CD8-positive, alpha-beta T cell (primary cell): ENCODE measurements at regions of chr16 and their contacts with region 1.

Region 1: DNA sequence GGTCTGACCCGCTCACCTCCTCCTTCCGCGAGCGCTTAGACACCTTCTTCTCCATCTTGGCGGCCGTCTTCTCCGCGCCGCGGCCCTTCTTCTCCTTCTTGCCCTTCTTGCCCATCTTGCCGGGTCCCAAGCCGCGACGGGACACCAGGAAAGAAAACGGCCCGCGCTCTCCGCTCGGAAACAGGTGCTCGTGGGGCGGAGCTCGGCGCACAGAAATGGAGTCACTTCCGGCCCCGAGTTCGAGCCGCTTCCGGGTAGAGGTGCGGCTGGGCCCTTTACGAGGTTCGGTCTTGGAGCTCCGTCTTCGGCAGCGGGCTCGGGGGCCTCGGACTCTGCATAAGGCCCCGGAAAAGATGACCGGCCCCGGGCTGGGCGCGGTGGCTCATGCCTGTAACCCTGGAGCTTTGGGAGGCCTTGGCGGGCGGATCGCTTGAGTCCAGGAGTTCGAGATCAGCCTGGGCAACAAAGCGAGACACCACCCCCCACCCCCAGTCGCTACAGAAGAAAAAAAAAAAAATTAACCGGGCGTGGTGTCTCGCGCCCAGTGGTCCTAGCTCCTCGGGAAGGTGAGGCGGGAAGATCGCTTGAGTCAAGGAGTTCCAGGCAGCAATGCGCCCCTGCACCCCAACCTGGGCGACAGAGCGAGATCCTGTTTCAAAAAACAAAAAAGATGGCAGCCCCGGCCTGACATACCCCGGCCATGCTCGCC is at the start of gene KLHDC4:
- DNase-seq: peak; percentile 78 to 94 (median 89)
- ATAC-seq: peak; percentile 43
- H3K4me3 ChIP-seq: peak within 1 kb of the TSS; percentile 86 to 89
- H3K4me3 Mint-ChIP-seq: peak within 1 kb of the TSS; percentile 98
- H3K27ac ChIP-seq: peak within 1 kb of the TSS; percentile 88 to 95
- H3K27ac Mint-ChIP-seq: peak within 1 kb of the TSS; percentile 99
- H3K4me1 ChIP-seq: peaks cover 45% of the 10 kb centered on the region
- H3K4me1 Mint-ChIP-seq: peaks cover 42% of the 10 kb centered on the region
- H3K27me3 ChIP-seq: no peaks in the 10 kb centered on the region
- H3K27me3 Mint-ChIP-seq: no peaks in the 10 kb centered on the region
- CTCF ChIP-seq: no peak
- total RNA-seq, gene KLHDC4: 74.0 to 81.6 TPM

Region 2: GRCh38 chr16:87316923-87317749 is 448.8 kb before region 1 on chr16 and contains the start of gene C16orf95:
- CTCF ChIA-PET with region 1: no interaction called
- POLR2A ChIA-PET with region 1: no interaction called
- intact Hi-C with region 1: loop called (anchors 2 kb)
- DNase-seq: peak; percentile 93 to 99 (median 97)
- ATAC-seq: peak; percentile 89
- H3K4me3 ChIP-seq: peak within 1 kb of the TSS; percentile 92 to 99
- H3K4me3 Mint-ChIP-seq: peak within 1 kb of the TSS; percentile 94
- H3K27ac ChIP-seq: peak within 1 kb of the TSS; percentile 76 to 81
- H3K27ac Mint-ChIP-seq: peak within 1 kb of the TSS; percentile 95
- H3K4me1 ChIP-seq: peaks cover 8% of the 10 kb centered on the region
- H3K4me1 Mint-ChIP-seq: peaks cover 14% of the 10 kb centered on the region
- H3K27me3 ChIP-seq: no peaks in the 10 kb centered on the region
- H3K27me3 Mint-ChIP-seq: no peaks in the 10 kb centered on the region
- CTCF ChIP-seq: peak; percentile 42
- total RNA-seq, gene C16orf95: 0.76 to 1.2 TPM

Region 3: DNA sequence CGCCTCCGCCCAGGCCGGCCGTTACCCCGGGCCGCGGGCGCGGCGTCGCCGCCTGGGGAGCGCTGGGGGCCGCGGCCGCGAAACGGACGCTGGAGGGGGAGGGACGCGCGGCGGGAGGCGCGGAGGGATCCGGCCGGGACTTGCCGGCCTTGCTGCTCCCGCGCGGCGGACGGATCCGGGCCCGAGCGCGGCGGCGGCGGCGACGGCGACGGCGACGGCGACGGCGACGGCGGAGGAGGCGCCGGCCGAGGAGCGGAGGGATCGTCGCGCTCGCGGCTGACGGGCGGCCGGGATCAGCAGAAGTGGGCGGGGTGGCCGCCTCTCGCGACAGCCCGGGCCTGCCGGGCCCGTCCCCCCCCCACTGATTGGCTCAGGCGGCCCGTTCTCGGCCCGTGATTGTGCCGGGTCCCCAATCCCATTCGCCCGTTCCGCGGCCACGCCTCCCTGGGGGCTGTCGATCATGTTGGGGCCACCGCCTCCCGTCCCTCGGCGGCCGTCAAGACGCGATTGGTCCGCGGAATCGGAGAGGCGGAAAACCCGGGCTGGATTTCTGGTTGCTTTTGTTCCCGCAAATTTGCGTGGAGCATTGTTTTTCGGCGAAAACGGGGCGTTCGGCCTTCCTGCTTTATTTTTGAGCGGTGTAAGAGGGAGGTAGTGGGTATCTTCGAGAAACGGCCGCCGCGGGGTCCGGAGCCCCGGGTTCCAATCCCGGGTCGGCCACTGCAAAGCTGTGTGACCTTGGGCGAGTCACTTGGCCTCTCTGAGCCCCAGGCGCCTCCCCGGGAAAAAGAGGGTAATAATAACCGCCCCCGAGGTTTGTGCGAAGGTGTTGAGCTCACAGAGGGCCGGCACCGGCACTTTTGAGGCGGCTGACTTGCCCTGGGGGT is 273.0 kb before region 1 on chr16 and contains the start of gene ZCCHC14:
- CTCF ChIA-PET with region 1: no interaction called
- POLR2A ChIA-PET with region 1: interaction called, 3 read pairs
- intact Hi-C with region 1: loop called (anchors 1 to 2 kb)
- DNase-seq: peak; percentile 97 to 99 (median 99)
- ATAC-seq: peak; percentile 92
- H3K4me3 ChIP-seq: peak within 1 kb of the TSS; percentile 70 to 71
- H3K4me3 Mint-ChIP-seq: peak within 1 kb of the TSS; percentile 89
- H3K27ac ChIP-seq: peak within 1 kb of the TSS; percentile 30 to 48
- H3K27ac Mint-ChIP-seq: peak within 1 kb of the TSS; percentile 82
- H3K4me1 ChIP-seq: peaks cover 41% of the 10 kb centered on the region
- H3K4me1 Mint-ChIP-seq: peaks cover 52% of the 10 kb centered on the region
- H3K27me3 ChIP-seq: no peaks in the 10 kb centered on the region
- H3K27me3 Mint-ChIP-seq: no peaks in the 10 kb centered on the region
- CTCF ChIP-seq: no peak
- total RNA-seq, gene ZCCHC14: 13.2 TPM

Region 4: GRCh38 chr16:87702325-87702811 is 63.6 kb before region 1 on chr16:
- CTCF ChIA-PET with region 1: interaction called, 4 read pairs
- POLR2A ChIA-PET with region 1: interaction called, 5 read pairs
- intact Hi-C with region 1: loop called in 1 of 2 experiments (anchors 5 kb)
- DNase-seq: peak in 8 of 9 experiments; percentile 17 to 67 (median 46)
- ATAC-seq: peak; percentile 56
- H3K4me3 ChIP-seq: peak overlapping the region in 1 of 2 experiments; percentile 0
- H3K4me3 Mint-ChIP-seq: peak overlapping the region; percentile 60
- H3K27ac ChIP-seq: peak overlapping the region in 1 of 2 experiments; percentile 40
- H3K27ac Mint-ChIP-seq: peak overlapping the region; percentile 71
- H3K4me1 ChIP-seq: peaks cover 39% of the 10 kb centered on the region
- H3K4me1 Mint-ChIP-seq: peaks cover 44% of the 10 kb centered on the region
- H3K27me3 ChIP-seq: no peaks in the 10 kb centered on the region
- H3K27me3 Mint-ChIP-seq: no peaks in the 10 kb centered on the region
- CTCF ChIP-seq: no peak

Region 5: GRCh38 chr16:87877938-87878507 is 112.1 kb after region 1 on chr16:
- CTCF ChIA-PET with region 1: interaction called, 21 read pairs
- POLR2A ChIA-PET with region 1: no interaction called
- intact Hi-C with region 1: no loop called
- DNase-seq: peak in 1 of 9 experiments; percentile 46
- ATAC-seq: no peak
- H3K4me3 ChIP-seq: no peak overlapping the region
- H3K4me3 Mint-ChIP-seq: no peak overlapping the region
- H3K27ac ChIP-seq: no peak overlapping the region
- H3K27ac Mint-ChIP-seq: no peak overlapping the region
- H3K4me1 ChIP-seq: peaks cover 6% of the 10 kb centered on the region
- H3K4me1 Mint-ChIP-seq: peaks cover 8% of the 10 kb centered on the region
- H3K27me3 ChIP-seq: peaks cover 0 to 2% of the 10 kb centered on the region in 2 experiments
- H3K27me3 Mint-ChIP-seq: no peaks in the 10 kb centered on the region
- CTCF ChIP-seq: no peak

Region 6: DNA sequence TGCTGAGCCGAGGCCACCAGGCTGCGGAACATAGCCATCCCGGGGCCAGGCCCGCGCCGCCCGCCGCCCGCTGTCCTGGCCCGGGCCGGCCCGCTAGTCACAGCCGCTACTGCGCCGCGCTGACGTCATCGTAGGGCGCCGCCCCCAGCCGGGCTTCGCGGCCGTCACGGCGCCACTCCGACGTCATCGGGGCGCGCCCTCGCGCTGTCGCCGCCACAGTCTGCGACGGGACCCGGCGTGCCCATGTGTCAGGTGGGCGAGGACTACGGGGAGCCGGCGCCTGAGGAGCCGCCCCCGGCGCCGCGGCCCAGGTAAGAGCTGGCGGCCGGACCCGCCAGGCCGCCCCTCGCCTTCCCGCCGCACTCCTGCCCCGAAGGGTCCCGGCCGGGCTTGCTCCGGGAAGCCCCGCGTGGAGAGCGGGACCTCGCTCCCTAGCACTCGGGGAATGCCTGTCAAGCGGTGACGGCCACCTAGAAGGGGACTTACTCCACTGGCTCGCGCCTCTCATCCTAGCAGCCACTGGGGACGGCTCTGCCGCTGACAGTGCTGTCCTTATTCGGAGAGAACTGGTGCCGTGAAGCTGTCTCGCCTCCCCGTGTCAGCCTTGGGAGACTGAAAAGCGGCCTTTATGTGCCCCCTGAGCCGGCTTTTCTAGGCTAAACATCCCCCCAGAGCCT is 940.5 kb after region 1 on chr16 and contains the starts of genes CTU2 and RNF166:
- CTCF ChIA-PET with region 1: no interaction called
- POLR2A ChIA-PET with region 1: no interaction called
- intact Hi-C with region 1: loop called in 1 of 2 experiments (anchors 10 kb)
- DNase-seq: peak; percentile 79 to 97 (median 91)
- ATAC-seq: peak; percentile 55
- H3K4me3 ChIP-seq: peak within 1 kb of the TSS; percentile 80 to 89
- H3K4me3 Mint-ChIP-seq: peak within 1 kb of the TSS; percentile 90
- H3K27ac ChIP-seq: peak within 1 kb of the TSS; percentile 88 to 91
- H3K27ac Mint-ChIP-seq: peak within 1 kb of the TSS; percentile 98
- H3K4me1 ChIP-seq: peaks cover 30% of the 10 kb centered on the region
- H3K4me1 Mint-ChIP-seq: peaks cover 44% of the 10 kb centered on the region
- H3K27me3 ChIP-seq: no peaks in the 10 kb centered on the region
- H3K27me3 Mint-ChIP-seq: no peaks in the 10 kb centered on the region
- CTCF ChIP-seq: no peak
- total RNA-seq, gene CTU2: 59.5 to 60.4 TPM
- total RNA-seq, gene RNF166: 371 to 406 TPM